Psoas muscle (tissue), 8 donors: ENCODE measurements at regions of chr14 and their contacts with region 1.

Region 1: GRCh38 chr14:49692811-49693734 is at the start of gene KLHDC1:
- DNase-seq: peak; percentile 89 to 94
- ATAC-seq: peak; percentile 85 to 94 (median 91)
- H3K4me3 ChIP-seq: peak within 1 kb of the TSS; percentile 75
- H3K27ac ChIP-seq: peak within 1 kb of the TSS; percentile 93
- H3K4me1 ChIP-seq: peaks cover 5% of the 10 kb centered on the region
- H3K27me3 ChIP-seq: no peaks in the 10 kb centered on the region
- CTCF ChIP-seq: no peak
- total RNA-seq, gene KLHDC1: 5.3 to 7.6 (median 6.9) TPM

Region 2: GRCh38 chr14:49461529-49462401 is 231.3 kb before region 1 on chr14:
- intact Hi-C with region 1: loop called in 1 of 2 experiments (anchors 5 kb)
- DNase-seq: no peak
- ATAC-seq: no peak
- H3K4me3 ChIP-seq: no peak overlapping the region
- H3K27ac ChIP-seq: no peak overlapping the region
- H3K4me1 ChIP-seq: no peaks in the 10 kb centered on the region
- H3K27me3 ChIP-seq: peaks cover 0 to 3% (median 0%) of the 10 kb centered on the region in 3 donors
- CTCF ChIP-seq: peak; percentile 49

Region 3: DNA sequence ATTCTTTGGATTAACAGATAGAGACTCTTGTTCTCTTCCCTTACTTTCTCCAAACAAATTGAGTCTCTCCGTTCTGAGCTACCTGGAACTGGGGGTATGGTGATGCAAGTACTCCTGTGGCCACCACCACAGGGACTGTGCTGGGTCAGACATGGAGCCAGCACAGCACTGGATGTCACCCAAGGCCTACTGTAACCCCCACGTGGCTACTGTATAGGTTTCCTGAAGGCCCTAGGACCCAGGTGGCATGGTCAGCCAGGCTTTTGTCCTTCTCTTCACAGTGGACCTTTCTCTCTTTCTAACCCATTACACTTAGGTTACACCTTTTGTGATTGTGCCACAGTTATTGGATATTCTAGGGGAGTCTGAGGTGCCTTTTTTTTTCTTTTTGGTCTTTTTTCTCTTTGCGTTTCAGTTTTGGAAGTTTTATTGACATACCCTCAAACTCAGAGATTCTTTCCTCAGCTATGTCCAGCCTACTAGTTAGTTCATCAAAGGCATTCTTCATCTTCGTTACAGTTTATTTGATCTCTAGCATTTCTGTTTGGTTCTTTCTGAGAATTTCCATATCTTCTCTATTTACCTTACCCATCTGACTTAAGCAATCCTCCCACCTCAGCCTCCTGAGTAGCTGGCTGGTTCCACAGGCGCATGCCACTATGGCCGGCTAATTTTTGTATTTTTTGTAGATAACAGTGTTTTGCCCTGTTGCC is 68.9 kb after region 1 on chr14:
- intact Hi-C with region 1: loop called in 1 of 2 experiments (anchors 5 kb)
- DNase-seq: no peak
- ATAC-seq: no peak
- H3K4me3 ChIP-seq: no peak overlapping the region
- H3K27ac ChIP-seq: no peak overlapping the region
- H3K4me1 ChIP-seq: no peaks in the 10 kb centered on the region
- H3K27me3 ChIP-seq: no peaks in the 10 kb centered on the region
- CTCF ChIP-seq: no peak

Region 4: DNA sequence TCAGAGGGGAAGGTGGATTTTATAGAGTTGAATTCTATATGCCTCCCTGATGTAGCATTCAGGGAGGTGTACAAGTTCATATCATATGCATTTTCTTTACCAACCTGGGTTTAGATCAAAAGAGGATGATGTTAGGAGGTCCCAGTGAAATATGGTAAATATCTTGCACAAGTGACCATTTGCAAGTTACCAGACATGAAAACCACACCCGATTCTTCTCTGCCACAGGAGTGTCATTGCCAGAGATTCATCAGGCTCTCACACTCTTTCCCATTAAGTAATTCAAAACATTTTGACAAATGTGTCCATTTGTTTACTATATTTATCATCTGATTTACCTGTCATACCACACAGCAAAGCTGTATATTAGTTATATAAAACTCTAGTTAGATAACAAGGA is 379.3 kb after region 1 on chr14:
- intact Hi-C with region 1: no loop called
- DNase-seq: no peak
- ATAC-seq: no peak
- H3K4me3 ChIP-seq: no peak overlapping the region
- H3K27ac ChIP-seq: no peak overlapping the region
- H3K4me1 ChIP-seq: no peaks in the 10 kb centered on the region
- H3K27me3 ChIP-seq: no peaks in the 10 kb centered on the region
- CTCF ChIP-seq: no peak